ENCODE measurements at regions of chr4 and their contacts with region 1.

Region 1: GRCh38 chr4:107037199-107037584 is 1.1 kb upstream of the DKK2 start:
- DNase-seq: peak; percentile 43
- H3K4me3 ChIP-seq: peak overlapping the region in 1 of 3 experiments; percentile 84
- H3K27ac ChIP-seq: no peak overlapping the region
- H3K4me1 ChIP-seq: peaks cover 34% of the 10 kb centered on the region
- H3K27me3 ChIP-seq: peaks cover 17 to 19% of the 10 kb centered on the region in 2 experiments
- CTCF ChIP-seq: peak; percentile 65 to 77
- POLR2A ChIP-seq: no peak

Region 2: DNA sequence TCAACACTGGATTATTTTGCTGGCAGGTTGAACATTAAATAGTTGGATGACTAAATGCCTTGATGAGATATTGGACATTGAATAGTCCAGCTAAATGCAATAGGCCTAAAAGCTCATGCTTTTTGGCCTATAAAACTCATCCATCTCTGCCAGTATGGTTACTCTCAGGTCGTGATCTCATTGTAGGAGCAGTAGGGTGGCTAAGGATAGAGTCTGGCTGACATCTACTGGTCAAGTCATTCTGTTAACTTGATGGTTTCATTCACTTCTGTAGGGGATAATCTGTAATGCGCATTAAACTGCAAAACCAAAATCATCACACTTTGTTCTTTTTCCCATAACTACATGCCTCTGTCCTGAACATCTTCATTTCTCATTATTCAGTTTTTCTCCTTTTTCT is 228.1 kb before region 1 on chr4:
- CTCF ChIA-PET with region 1: no interaction called
- POLR2A ChIA-PET with region 1: no interaction called
- dilution Hi-C with region 1: no loop called
- intact Hi-C with region 1: no loop called
- DNase-seq: peak; percentile 66
- H3K4me3 ChIP-seq: no peak overlapping the region
- H3K27ac ChIP-seq: no peak overlapping the region
- H3K4me1 ChIP-seq: no peaks in the 10 kb centered on the region
- H3K27me3 ChIP-seq: no peaks in the 10 kb centered on the region
- CTCF ChIP-seq: peak; percentile 27 to 30
- POLR2A ChIP-seq: no peak

Region 3: GRCh38 chr4:107519053-107519452 is 481.9 kb after region 1 on chr4:
- CTCF ChIA-PET with region 1: interaction called, 6 read pairs
- POLR2A ChIA-PET with region 1: no interaction called
- dilution Hi-C with region 1: no loop called
- intact Hi-C with region 1: loop called (anchors 5 kb)
- DNase-seq: peak; percentile 44
- H3K4me3 ChIP-seq: no peak overlapping the region
- H3K27ac ChIP-seq: no peak overlapping the region
- H3K4me1 ChIP-seq: no peaks in the 10 kb centered on the region
- H3K27me3 ChIP-seq: no peaks in the 10 kb centered on the region
- CTCF ChIP-seq: peak in 1 of 2 donors; percentile 29
- POLR2A ChIP-seq: no peak

Region 4: DNA sequence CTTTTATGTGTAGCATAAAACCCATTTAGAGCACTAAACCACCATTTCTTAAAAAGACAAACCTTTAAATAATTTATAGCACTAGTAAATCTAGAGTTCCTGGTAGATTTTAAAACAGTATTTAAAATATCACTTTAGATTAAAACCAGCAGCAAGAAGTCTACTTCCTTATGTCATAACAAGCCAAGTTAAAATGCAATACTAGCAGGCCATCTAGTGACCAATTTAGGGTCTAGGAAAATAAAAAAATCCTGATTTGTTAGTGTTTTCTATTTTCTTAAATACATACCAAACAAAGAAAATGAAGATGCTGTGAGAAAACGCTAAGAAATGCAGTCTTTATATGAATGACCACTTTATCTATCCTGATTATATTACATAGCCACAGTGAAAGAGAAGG is 628.9 kb after region 1 on chr4:
- CTCF ChIA-PET with region 1: no interaction called
- POLR2A ChIA-PET with region 1: no interaction called
- dilution Hi-C with region 1: no loop called
- intact Hi-C with region 1: loop called (anchors 5 kb)
- DNase-seq: peak; percentile 57
- H3K4me3 ChIP-seq: no peak overlapping the region
- H3K27ac ChIP-seq: no peak overlapping the region
- H3K4me1 ChIP-seq: peaks cover 3% of the 10 kb centered on the region
- H3K27me3 ChIP-seq: no peaks in the 10 kb centered on the region
- CTCF ChIP-seq: peak in 1 of 2 donors; percentile 0
- POLR2A ChIP-seq: no peak

Measured in endothelial cell of umbilical vein (primary cell).